Activated T-helper 1 cell treated with anti-CD3 and anti-CD28 coated beads, Interleukin-12 subunit alpha, Interleukin-12 subunit beta, Interleukin-2, Interleukin-4 antibody, amounts not matched to agents 30 ng/mL and 10 ng/mL and 1 ng/mL, durations not matched to agents 14 hours and 24 hours and 36 hours (primary cell): ENCODE measurements at regions of chr1 and their contacts with region 1.

Region 1: DNA sequence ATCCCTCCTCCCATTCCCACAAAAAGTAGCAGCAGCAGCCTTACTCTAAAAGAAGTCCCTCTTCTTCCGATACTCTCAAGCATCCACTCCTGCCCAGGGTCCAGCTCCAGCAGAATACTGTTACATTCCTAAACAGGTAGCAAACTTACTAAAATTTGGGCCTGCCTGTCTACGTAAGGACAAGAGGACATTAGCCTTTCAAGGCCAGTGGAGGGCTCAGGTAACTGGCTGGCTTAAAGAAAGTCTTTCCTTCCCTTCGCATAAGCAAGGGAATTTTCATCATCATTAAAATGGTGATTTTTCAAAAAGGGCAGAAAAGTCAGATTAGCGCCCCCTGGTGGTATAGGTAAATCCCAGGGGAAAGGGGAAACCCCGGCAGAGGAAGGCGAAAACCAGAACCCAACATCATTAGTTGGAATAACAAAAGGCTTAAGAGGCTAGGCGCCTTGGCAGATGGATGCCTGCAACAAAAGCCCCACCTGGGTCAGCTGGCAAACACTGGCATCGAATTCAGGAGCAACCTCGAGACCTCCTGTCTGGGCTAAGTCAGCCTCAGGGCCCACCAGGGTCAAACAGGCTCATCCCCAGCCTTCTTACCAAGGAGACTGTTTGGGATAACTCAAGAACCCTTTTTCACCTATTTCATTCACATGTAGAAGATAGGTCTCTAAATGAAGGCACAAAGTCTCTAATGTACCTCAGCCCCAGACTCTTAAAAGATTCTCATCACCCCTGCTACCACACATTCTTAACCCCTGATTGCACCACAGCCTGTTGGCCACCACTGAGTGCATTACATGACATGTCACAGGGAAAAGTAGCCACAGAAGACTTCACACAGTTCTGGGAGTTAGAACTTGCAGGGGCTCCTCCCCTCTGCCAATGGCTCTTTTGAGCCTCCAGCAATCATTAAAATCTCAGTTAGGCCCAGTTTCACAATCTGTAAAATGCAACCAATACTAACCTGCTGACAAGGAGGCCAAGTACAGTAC is 36.7 kb downstream of the ERI3 start:
- DNase-seq: peak; percentile 34
- H3K4me3 Mint-ChIP-seq: no peak overlapping the region
- H3K27ac Mint-ChIP-seq: no peak overlapping the region
- H3K4me1 Mint-ChIP-seq: peaks cover 33% of the 10 kb centered on the region
- H3K27me3 Mint-ChIP-seq: no peaks in the 10 kb centered on the region

Region 2: GRCh38 chr1:44251989-44252671 is 66.3 kb before region 1 on chr1:
- intact Hi-C with region 1: loop called (anchors 5 kb)
- DNase-seq: no peak
- H3K4me3 Mint-ChIP-seq: no peak overlapping the region
- H3K27ac Mint-ChIP-seq: no peak overlapping the region
- H3K4me1 Mint-ChIP-seq: no peaks in the 10 kb centered on the region
- H3K27me3 Mint-ChIP-seq: no peaks in the 10 kb centered on the region

Region 3: GRCh38 chr1:44283524-44284173 is 34.7 kb before region 1 on chr1:
- intact Hi-C with region 1: loop called (anchors 5 kb)
- DNase-seq: no peak
- H3K4me3 Mint-ChIP-seq: no peak overlapping the region
- H3K27ac Mint-ChIP-seq: peak overlapping the region; percentile 13
- H3K4me1 Mint-ChIP-seq: no peaks in the 10 kb centered on the region
- H3K27me3 Mint-ChIP-seq: no peaks in the 10 kb centered on the region